ENCODE measurements at regions of chr1 and their contacts with region 1.

Region 1: DNA sequence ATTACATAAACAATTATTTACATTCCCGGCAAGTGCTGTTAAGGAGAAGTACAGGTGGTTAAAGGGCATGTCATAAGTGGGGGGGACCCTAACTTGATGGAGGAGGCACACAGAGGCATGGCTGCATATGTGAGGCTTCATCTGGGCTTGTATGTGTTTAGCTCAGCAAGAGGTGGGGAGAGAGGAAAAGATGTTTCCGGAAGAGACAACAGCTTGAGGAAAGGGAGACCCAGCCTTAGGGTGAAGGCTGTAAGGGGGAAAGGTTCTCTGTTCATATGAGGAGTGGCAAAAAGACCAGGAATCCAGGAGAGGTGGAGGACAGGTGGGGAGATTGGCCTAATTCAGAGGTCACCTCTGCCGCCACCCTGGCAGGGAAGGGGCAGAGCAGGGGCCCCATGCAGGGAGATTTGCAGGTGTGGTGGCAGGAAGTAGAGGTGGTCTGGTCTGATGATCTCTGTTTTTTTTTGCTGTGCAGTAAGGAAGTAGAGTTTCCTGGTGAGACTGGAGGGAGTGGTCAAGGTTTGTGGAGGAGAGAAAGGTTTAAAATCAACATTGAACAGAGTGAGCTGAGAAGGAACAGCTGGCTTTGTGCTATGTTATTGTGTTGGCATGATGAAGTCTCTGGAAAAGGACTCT is 9.0 kb downstream of the TRAF5 start:
- DNase-seq: peak; percentile 38
- H3K4me3 Mint-ChIP-seq: peak overlapping the region; percentile 48
- H3K27ac Mint-ChIP-seq: peak overlapping the region; percentile 86
- H3K4me1 Mint-ChIP-seq: peaks cover 82% of the 10 kb centered on the region
- H3K27me3 Mint-ChIP-seq: no peaks in the 10 kb centered on the region

Region 2: GRCh38 chr1:211352985-211353515 is 17.4 kb after region 1 on chr1:
- CTCF ChIA-PET with region 1: interaction called, 6 read pairs
- POLR2A ChIA-PET with region 1: interaction called, 5 read pairs
- intact Hi-C with region 1: loop called (anchors 1 kb)
- DNase-seq: peak; percentile 75
- H3K4me3 Mint-ChIP-seq: peak overlapping the region; percentile 16
- H3K27ac Mint-ChIP-seq: peak overlapping the region; percentile 88
- H3K4me1 Mint-ChIP-seq: peaks cover 79% of the 10 kb centered on the region
- H3K27me3 Mint-ChIP-seq: no peaks in the 10 kb centered on the region